ENCODE measurements at regions of chr13 and their contacts with region 1.

Region 1: DNA sequence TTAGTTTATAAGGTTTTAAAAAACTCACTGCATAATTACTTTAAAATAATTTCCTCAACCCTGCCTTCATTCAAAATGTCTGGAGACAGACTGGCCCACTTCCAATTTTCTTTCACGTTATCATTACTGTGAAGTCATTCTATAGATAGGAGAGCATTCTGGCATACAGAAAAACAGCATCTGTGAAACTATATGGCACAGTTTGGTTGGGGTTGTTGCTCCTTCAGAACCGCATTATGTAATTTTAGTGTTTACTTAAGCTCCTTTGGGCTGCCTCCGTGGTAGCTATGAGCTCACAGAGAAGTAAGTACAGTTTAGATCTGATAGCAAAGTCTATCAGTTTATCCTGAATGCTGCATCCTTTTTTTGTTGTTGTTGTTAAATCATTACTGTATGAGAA is 104.3 kb downstream of the KCNRG start:
- DNase-seq: no peak
- ATAC-seq: no peak
- H3K4me3 ChIP-seq: no peak overlapping the region
- H3K27ac ChIP-seq: no peak overlapping the region
- H3K4me1 ChIP-seq: peaks cover 8 to 15% (median 15%) of the 10 kb centered on the region in 3 donors
- H3K27me3 ChIP-seq: no peaks in the 10 kb centered on the region
- CTCF ChIP-seq: no peak

Region 2: DNA sequence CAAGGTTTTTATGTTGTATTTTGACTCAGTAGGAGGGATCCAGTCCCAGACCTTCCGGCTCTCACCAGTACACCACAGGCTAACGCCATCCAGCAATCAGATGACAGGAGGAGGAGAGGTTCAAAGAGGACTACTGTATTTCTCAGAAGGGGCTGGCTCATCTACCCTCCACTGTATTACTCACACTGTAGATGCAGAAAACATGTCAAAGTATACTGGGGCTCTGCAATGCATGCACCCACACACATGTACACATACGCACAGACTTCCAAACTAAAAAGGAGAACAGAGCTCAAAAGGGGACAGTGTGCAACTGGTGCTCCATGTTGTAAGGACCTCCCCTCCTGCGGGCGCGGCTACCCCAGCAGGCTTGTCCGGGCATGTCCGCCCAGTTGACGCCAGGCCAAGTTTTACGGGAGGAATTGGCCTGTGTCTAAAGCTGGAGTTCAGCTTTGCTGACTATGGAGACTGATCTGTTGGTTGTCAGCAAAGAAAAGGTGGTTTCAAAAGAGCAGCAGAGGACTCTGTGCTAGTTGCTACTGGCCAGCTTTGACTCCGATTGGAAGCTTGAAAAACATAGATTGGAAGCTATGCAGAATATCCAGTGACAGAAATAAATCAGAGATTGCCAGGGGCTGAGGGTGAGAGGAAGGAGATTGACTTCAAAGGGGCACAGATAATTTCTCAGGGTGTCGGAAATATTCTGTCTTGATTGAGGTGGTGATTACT is 409.7 kb after region 1 on chr13:
- intact Hi-C with region 1: loop called in 1 of 3 experiments (anchors 10 kb)
- DNase-seq: peak; percentile 73 to 96 (median 82)
- ATAC-seq: peak; percentile 84 to 95 (median 91)
- H3K4me3 ChIP-seq: no peak overlapping the region
- H3K27ac ChIP-seq: peak overlapping the region in 3 of 4 donors; percentile 11 to 25 (median 15)
- H3K4me1 ChIP-seq: peaks cover 8 to 29% (median 19%) of the 10 kb centered on the region in 3 donors
- H3K27me3 ChIP-seq: no peaks in the 10 kb centered on the region
- CTCF ChIP-seq: no peak

Measured in pancreas (tissue), 10 donors.